ENCODE measurements at regions of chr11 and their contacts with region 1.

Region 1: GRCh38 chr11:4636962-4637661 is at the start of gene OR51D1:
- DNase-seq: peak; percentile 67
- ATAC-seq: peak; percentile 99
- H3K4me3 ChIP-seq: peak within 1 kb of the TSS; percentile 38
- H3K27ac ChIP-seq: no peak within 1 kb of the TSS
- H3K4me1 ChIP-seq: no peaks in the 10 kb centered on the region
- H3K27me3 ChIP-seq: peaks cover 2% of the 10 kb centered on the region; the same call in 1 of the 2 replicates
- CTCF ChIP-seq: peak; percentile 88
- POLR2A ChIP-seq: no peak
- RAD21 ChIP-seq: peak; percentile 93
- total RNA-seq, gene OR51D1: not detected in 2 replicates

Region 2: DNA sequence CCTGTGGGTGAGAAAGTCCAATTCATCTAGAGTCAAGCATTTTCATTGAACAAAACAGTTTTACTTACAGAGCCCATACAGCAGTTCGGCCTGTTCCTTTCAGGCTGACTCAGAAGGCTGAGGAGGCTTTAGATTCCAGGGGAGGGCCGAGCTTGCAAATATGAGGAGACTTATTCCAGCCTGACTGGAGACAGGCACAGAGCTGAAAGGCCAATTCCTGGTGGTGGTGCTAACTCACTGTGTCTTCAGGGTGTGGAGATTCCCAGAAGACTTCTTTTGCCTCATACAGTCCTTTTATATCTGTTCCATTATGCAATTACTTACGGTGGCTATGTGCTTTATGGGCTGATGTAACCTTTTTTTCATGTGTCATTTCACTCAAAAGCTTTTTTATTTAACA is 60.5 kb after region 1 on chr11 and contains the start of gene OR51E2:
- CTCF ChIA-PET with region 1: interaction called, 3 read pairs
- POLR2A ChIA-PET with region 1: no interaction called
- dilution Hi-C with region 1: no loop called
- in situ Hi-C with region 1: no loop called
- intact Hi-C with region 1: loop called (anchors 2 kb)
- DNase-seq: peak; percentile 78
- ATAC-seq: peak; percentile 92
- H3K4me3 ChIP-seq: no peak within 1 kb of the TSS
- H3K27ac ChIP-seq: peak within 1 kb of the TSS; percentile 38; the same call in 1 of the 2 replicates
- H3K4me1 ChIP-seq: peaks cover 2% of the 10 kb centered on the region
- H3K27me3 ChIP-seq: no peaks in the 10 kb centered on the region
- CTCF ChIP-seq: no peak
- POLR2A ChIP-seq: no peak
- RAD21 ChIP-seq: peak; percentile 13; the same call in 1 of the 2 replicates
- total RNA-seq, gene OR51E2: 0.56 and 0.72 TPM in 2 replicates

Region 3: DNA sequence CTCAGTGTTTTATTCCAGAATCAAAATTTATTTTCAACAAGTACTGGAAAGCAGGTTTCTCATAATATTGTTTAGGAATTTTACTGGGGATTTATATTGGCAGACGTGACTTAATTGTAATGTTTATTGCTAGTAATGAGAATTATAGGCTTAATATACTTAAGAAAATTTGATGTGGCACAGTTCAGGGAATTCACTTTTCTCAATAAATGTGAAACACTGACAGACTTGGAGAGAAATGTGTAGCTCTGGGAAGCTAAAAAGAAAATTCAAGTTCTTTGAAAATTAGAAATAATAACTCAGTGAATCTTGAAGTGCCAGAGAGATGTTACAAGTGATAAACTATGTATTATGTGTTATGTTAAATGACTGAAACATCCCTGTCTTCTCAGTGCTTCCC is 183.9 kb after region 1 on chr11 and contains the start of gene OR51F2:
- CTCF ChIA-PET with region 1: interaction called, 6 read pairs
- POLR2A ChIA-PET with region 1: no interaction called
- dilution Hi-C with region 1: no loop called
- in situ Hi-C with region 1: loop called (anchors 5 kb)
- intact Hi-C with region 1: loop called (anchors 1 kb)
- DNase-seq: no peak
- ATAC-seq: no peak
- H3K4me3 ChIP-seq: no peak within 1 kb of the TSS
- H3K27ac ChIP-seq: no peak within 1 kb of the TSS
- H3K4me1 ChIP-seq: no peaks in the 10 kb centered on the region
- H3K27me3 ChIP-seq: no peaks in the 10 kb centered on the region; the same call in 1 of the 2 replicates
- CTCF ChIP-seq: no peak
- POLR2A ChIP-seq: no peak
- RAD21 ChIP-seq: no peak
- total RNA-seq, gene OR51F2: under 0.01 and 0.18 TPM in 2 replicates

Region 4: GRCh38 chr11:4826425-4826824 is 189.3 kb after region 1 on chr11:
- CTCF ChIA-PET with region 1: interaction called, 6 read pairs
- POLR2A ChIA-PET with region 1: no interaction called
- dilution Hi-C with region 1: no loop called
- in situ Hi-C with region 1: loop called (anchors 5 kb)
- intact Hi-C with region 1: loop called (anchors 1 kb)
- DNase-seq: peak; percentile 44
- ATAC-seq: peak; percentile 54
- H3K4me3 ChIP-seq: no peak overlapping the region
- H3K27ac ChIP-seq: no peak overlapping the region
- H3K4me1 ChIP-seq: no peaks in the 10 kb centered on the region
- H3K27me3 ChIP-seq: no peaks in the 10 kb centered on the region; the same call in 1 of the 2 replicates
- CTCF ChIP-seq: peak; percentile 69
- POLR2A ChIP-seq: no peak
- RAD21 ChIP-seq: peak; percentile 81

Region 5: GRCh38 chr11:4991060-4991459 is 353.9 kb after region 1 on chr11:
- CTCF ChIA-PET with region 1: interaction called, 8 read pairs
- POLR2A ChIA-PET with region 1: no interaction called
- dilution Hi-C with region 1: no loop called
- in situ Hi-C with region 1: loop called (anchors 5 kb)
- intact Hi-C with region 1: no loop called
- DNase-seq: peak; percentile 12
- ATAC-seq: no peak; the same call in 1 of the 2 replicates
- H3K4me3 ChIP-seq: no peak overlapping the region
- H3K27ac ChIP-seq: no peak overlapping the region
- H3K4me1 ChIP-seq: no peaks in the 10 kb centered on the region
- H3K27me3 ChIP-seq: no peaks in the 10 kb centered on the region; the same call in 1 of the 2 replicates
- CTCF ChIP-seq: peak; percentile 34
- POLR2A ChIP-seq: no peak
- RAD21 ChIP-seq: peak; percentile 45; the same call in 1 of the 2 replicates

Region 6: GRCh38 chr11:5004424-5005274 is 367.5 kb after region 1 on chr11:
- CTCF ChIA-PET with region 1: interaction called, 5 read pairs
- POLR2A ChIA-PET with region 1: no interaction called
- dilution Hi-C with region 1: no loop called
- in situ Hi-C with region 1: no loop called
- intact Hi-C with region 1: loop called (anchors 1 kb)
- DNase-seq: peak; percentile 61
- ATAC-seq: peak; percentile 73
- H3K4me3 ChIP-seq: no peak overlapping the region
- H3K27ac ChIP-seq: no peak overlapping the region
- H3K4me1 ChIP-seq: no peaks in the 10 kb centered on the region
- H3K27me3 ChIP-seq: no peaks in the 10 kb centered on the region; the same call in 1 of the 2 replicates
- CTCF ChIP-seq: peak; percentile 78
- POLR2A ChIP-seq: no peak
- RAD21 ChIP-seq: peak; percentile 80

Region 7: GRCh38 chr11:5380740-5381342 is 743.7 kb after region 1 on chr11:
- CTCF ChIA-PET with region 1: no interaction called
- POLR2A ChIA-PET with region 1: no interaction called
- dilution Hi-C with region 1: no loop called
- in situ Hi-C with region 1: loop called (anchors 10 kb)
- intact Hi-C with region 1: loop called (anchors 2 kb)
- DNase-seq: peak; percentile 77
- ATAC-seq: peak; percentile 100
- H3K4me3 ChIP-seq: no peak overlapping the region
- H3K27ac ChIP-seq: no peak overlapping the region
- H3K4me1 ChIP-seq: no peaks in the 10 kb centered on the region
- H3K27me3 ChIP-seq: no peaks in the 10 kb centered on the region
- CTCF ChIP-seq: peak; percentile 89
- POLR2A ChIP-seq: 0 out of 2 replicates have a peak, but pooled peaks have one; percentile 34
- RAD21 ChIP-seq: peak; percentile 98